Right ventricle myocardium inferior (tissue), 1 donor: ENCODE measurements at regions of chr11 and their contacts with region 1.

Region 1: GRCh38 chr11:59822989-59823566 is 12.5 kb upstream of the MRPL16 start:
- DNase-seq: no peak
- ATAC-seq: peak; percentile 69

Region 2: DNA sequence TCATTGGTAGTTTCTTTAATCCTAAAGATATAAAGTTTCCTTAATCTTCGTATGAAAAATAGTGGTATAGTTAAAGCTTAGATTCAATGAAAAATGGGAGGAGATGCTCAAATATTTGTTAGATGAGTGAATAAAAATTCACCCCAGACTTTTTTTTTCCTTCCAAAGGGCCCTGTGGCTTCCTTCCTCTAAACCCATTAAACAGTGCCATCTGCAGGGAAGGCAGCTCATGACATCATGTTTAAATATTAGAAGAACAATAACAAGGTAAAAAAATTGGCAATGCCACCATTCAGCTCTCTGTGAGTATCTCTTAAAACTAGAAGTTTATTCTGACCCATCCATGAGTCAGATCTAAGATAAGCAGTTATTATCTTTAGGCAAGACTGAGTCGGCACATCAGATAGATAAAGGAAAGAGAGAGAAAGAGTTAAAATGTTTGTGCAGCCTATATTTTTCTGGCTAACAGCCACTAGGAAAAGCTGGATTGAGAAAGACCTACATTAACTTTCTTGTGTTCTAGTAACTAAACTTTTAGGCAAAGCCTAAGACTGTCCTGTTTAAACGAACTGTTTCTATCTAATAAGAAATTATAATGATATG is 96.0 kb after region 1 on chr11:
- intact Hi-C with region 1: loop called (anchors 5 kb)
- DNase-seq: no peak
- ATAC-seq: no peak

Region 3: GRCh38 chr11:60130496-60130895 is 307.4 kb after region 1 on chr11:
- intact Hi-C with region 1: loop called (anchors 2 kb)
- DNase-seq: no peak
- ATAC-seq: peak; percentile 63

Region 4: GRCh38 chr11:60193687-60194433 is 370.8 kb after region 1 on chr11:
- intact Hi-C with region 1: loop called (anchors 5 kb)
- DNase-seq: no peak
- ATAC-seq: peak; percentile 63